ENCODE measurements at regions of chr13 and their contacts with region 1.

Region 1: DNA sequence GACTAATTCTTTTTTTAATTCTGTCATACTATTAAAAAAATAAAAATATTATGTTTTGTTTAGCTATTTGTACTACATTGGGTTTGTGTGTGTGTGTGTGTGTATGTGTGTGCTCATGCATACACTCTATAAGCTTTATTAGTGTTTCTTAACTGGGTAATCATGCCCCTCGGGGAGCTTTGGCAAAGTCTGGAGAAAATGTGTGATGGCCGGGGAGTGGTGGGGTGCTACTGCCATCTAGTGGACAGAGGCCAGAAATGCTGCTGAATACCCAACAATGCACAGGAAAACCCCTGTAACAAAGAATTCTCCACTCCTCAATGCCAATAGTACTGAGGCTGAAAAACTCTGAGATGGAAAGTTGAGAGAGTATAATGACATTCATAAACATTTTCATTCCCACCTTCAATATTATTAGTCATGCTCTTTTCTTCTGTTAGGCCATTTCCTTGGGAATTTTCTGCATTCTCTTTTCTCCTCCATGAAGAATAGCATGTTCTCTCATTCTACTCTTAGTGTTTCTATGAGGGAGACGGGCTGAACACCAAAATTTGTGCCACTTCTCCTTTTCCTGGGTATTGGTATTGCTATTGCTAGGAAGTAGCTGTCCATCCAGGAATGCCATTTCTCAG is 157.3 kb downstream of the DNAJC3 start:
- DNase-seq: peak; percentile 21
- ATAC-seq: peak; percentile 80
- H3K4me3 ChIP-seq: no peak overlapping the region
- H3K27ac ChIP-seq: no peak overlapping the region
- H3K4me1 ChIP-seq: peaks cover 0 to 6% of the 10 kb centered on the region in 2 experiments; a peak in 2 of 4 replicates
- H3K27me3 ChIP-seq: no peaks in the 10 kb centered on the region
- CTCF ChIP-seq: peak; percentile 72 to 90 (median 89)
- POLR2A ChIP-seq: no peak
- RAD21 ChIP-seq: peak; percentile 89

Region 2: GRCh38 chr13:95191821-95192563 is 642.3 kb before region 1 on chr13:
- CTCF ChIA-PET with region 1: interaction called, 6 read pairs
- POLR2A ChIA-PET with region 1: no interaction called
- RAD21 ChIA-PET with region 1: interaction called in 1 of 2 experiments, 3 read pairs
- intact Hi-C with region 1: loop called (anchors 1 kb)
- DNase-seq: peak; percentile 45
- ATAC-seq: peak; percentile 99
- H3K4me3 ChIP-seq: no peak overlapping the region
- H3K27ac ChIP-seq: no peak overlapping the region
- H3K4me1 ChIP-seq: no peaks in the 10 kb centered on the region
- H3K27me3 ChIP-seq: no peaks in the 10 kb centered on the region
- CTCF ChIP-seq: peak; percentile 80 to 97 (median 94)
- POLR2A ChIP-seq: no peak
- RAD21 ChIP-seq: peak; percentile 91

Region 3: GRCh38 chr13:95494082-95494681 is 340.1 kb before region 1 on chr13:
- CTCF ChIA-PET with region 1: interaction called, 4 read pairs
- POLR2A ChIA-PET with region 1: no interaction called
- RAD21 ChIA-PET with region 1: no interaction called
- intact Hi-C with region 1: loop called (anchors 2 kb)
- DNase-seq: peak; percentile 62
- ATAC-seq: peak; percentile 78
- H3K4me3 ChIP-seq: no peak overlapping the region
- H3K27ac ChIP-seq: no peak overlapping the region
- H3K4me1 ChIP-seq: peaks cover 0 to 4% of the 10 kb centered on the region in 2 experiments; a peak in 2 of 4 replicates
- H3K27me3 ChIP-seq: no peaks in the 10 kb centered on the region
- CTCF ChIP-seq: peak; percentile 48 to 77 (median 64); a peak in 5 of 6 replicates
- POLR2A ChIP-seq: no peak
- RAD21 ChIP-seq: peak; percentile 56

Region 4: GRCh38 chr13:95536632-95537241 is 297.5 kb before region 1 on chr13:
- CTCF ChIA-PET with region 1: interaction called, 15 read pairs
- POLR2A ChIA-PET with region 1: no interaction called
- RAD21 ChIA-PET with region 1: interaction called, 3 read pairs
- intact Hi-C with region 1: loop called (anchors 2 kb)
- DNase-seq: peak; percentile 15
- ATAC-seq: no peak
- H3K4me3 ChIP-seq: no peak overlapping the region
- H3K27ac ChIP-seq: no peak overlapping the region
- H3K4me1 ChIP-seq: peaks cover 0 to 30% of the 10 kb centered on the region in 2 experiments; a peak in 2 of 4 replicates
- H3K27me3 ChIP-seq: no peaks in the 10 kb centered on the region
- CTCF ChIP-seq: peak; percentile 9 to 59 (median 35); a peak in 4 of 6 replicates
- POLR2A ChIP-seq: no peak
- RAD21 ChIP-seq: peak; percentile 54; the same call in 1 of the 2 replicates

Region 5: DNA sequence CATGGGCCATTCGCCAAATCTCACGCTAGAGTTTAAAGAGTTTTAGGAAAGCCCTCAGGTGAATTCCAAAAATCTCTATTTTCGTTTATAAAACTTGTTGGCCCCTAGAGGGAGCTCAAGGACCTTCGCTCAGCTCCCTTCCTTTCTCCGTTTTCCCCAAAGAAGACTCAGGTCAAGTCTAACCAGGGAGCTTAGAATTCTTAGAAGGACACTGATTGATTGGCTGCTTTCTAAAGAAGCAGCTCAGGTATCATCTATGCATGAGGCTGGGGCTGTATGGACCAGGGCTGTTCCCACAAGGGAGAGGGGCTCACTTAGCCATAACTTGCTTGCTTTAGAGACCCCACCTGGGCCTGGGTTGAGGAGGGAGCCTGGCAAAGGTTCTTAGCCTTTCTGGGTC is 210.2 kb before region 1 on chr13:
- CTCF ChIA-PET with region 1: interaction called, 85 read pairs
- POLR2A ChIA-PET with region 1: interaction called, 4 read pairs
- RAD21 ChIA-PET with region 1: interaction called, 11 to 14 read pairs
- intact Hi-C with region 1: loop called (anchors 1 kb)
- DNase-seq: peak; percentile 39
- ATAC-seq: peak; percentile 86
- H3K4me3 ChIP-seq: no peak overlapping the region
- H3K27ac ChIP-seq: no peak overlapping the region
- H3K4me1 ChIP-seq: no peaks in the 10 kb centered on the region
- H3K27me3 ChIP-seq: no peaks in the 10 kb centered on the region
- CTCF ChIP-seq: peak; percentile 59 to 78 (median 65)
- POLR2A ChIP-seq: no peak
- RAD21 ChIP-seq: peak; percentile 79

Region 6: GRCh38 chr13:95660981-95661581 is 173.2 kb before region 1 on chr13:
- CTCF ChIA-PET with region 1: interaction called, 16 read pairs
- POLR2A ChIA-PET with region 1: no interaction called
- RAD21 ChIA-PET with region 1: no interaction called
- intact Hi-C with region 1: no loop called
- DNase-seq: peak; percentile 28
- ATAC-seq: no peak; the same call in 1 of the 2 replicates
- H3K4me3 ChIP-seq: no peak overlapping the region
- H3K27ac ChIP-seq: no peak overlapping the region
- H3K4me1 ChIP-seq: no peaks in the 10 kb centered on the region
- H3K27me3 ChIP-seq: no peaks in the 10 kb centered on the region
- CTCF ChIP-seq: peak; percentile 59 to 74 (median 64); a peak in 5 of 6 replicates
- POLR2A ChIP-seq: no peak
- RAD21 ChIP-seq: peak; percentile 57

Region 7: DNA sequence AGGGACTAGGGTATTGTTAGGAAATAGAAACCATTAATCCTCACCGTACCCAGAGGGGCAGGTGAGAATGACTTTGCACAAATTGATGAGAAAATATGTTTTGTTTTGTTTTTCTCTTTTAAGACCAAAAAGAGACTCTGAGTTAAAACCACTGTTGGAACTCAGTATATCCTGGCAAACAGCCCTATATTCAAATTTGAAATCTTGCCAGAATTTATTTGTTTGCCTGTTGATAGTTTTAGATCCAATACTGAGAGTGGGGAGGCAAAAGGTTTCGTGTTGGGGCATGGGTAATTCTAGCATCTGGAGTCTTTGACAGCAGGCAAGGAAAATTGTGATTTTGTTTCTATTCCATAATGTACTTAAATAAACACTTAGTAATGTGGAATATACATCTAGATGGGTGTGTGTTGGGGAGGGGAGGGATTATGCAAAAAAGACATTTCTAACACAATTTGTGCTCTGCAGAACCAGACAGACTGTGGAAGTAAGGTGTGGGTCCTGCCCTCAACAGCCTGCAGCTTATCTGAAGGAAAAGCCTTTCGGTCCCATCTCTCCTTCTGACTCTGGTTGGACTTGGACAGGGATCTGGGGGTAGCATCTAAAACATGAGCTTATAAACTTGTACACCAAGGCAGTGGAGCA is 969.3 kb after region 1 on chr13:
- CTCF ChIA-PET with region 1: no interaction called
- POLR2A ChIA-PET with region 1: no interaction called
- RAD21 ChIA-PET with region 1: no interaction called
- intact Hi-C with region 1: no loop called
- DNase-seq: no peak
- ATAC-seq: no peak
- H3K4me3 ChIP-seq: no peak overlapping the region
- H3K27ac ChIP-seq: no peak overlapping the region
- H3K4me1 ChIP-seq: no peaks in the 10 kb centered on the region
- H3K27me3 ChIP-seq: peaks cover 55% of the 10 kb centered on the region
- CTCF ChIP-seq: no peak
- POLR2A ChIP-seq: no peak
- RAD21 ChIP-seq: no peak